Activated T-helper 1 cell treated with anti-CD3 and anti-CD28 coated beads, Interleukin-12 subunit alpha, Interleukin-12 subunit beta, Interleukin-2, Interleukin-4 antibody, amounts not matched to agents 30 ng/mL and 10 ng/mL and 1 ng/mL, durations not matched to agents 14 hours and 24 hours and 36 hours (primary cell): ENCODE measurements at regions of chr6 and their contacts with region 1.

Region 1: GRCh38 chr6:20708367-20709124 is 174.3 kb downstream of the CDKAL1 start:
- DNase-seq: no peak
- H3K4me3 Mint-ChIP-seq: no peak overlapping the region
- H3K27ac Mint-ChIP-seq: peak overlapping the region; percentile 75
- H3K4me1 Mint-ChIP-seq: peaks cover 43% of the 10 kb centered on the region
- H3K27me3 Mint-ChIP-seq: no peaks in the 10 kb centered on the region

Region 2: DNA sequence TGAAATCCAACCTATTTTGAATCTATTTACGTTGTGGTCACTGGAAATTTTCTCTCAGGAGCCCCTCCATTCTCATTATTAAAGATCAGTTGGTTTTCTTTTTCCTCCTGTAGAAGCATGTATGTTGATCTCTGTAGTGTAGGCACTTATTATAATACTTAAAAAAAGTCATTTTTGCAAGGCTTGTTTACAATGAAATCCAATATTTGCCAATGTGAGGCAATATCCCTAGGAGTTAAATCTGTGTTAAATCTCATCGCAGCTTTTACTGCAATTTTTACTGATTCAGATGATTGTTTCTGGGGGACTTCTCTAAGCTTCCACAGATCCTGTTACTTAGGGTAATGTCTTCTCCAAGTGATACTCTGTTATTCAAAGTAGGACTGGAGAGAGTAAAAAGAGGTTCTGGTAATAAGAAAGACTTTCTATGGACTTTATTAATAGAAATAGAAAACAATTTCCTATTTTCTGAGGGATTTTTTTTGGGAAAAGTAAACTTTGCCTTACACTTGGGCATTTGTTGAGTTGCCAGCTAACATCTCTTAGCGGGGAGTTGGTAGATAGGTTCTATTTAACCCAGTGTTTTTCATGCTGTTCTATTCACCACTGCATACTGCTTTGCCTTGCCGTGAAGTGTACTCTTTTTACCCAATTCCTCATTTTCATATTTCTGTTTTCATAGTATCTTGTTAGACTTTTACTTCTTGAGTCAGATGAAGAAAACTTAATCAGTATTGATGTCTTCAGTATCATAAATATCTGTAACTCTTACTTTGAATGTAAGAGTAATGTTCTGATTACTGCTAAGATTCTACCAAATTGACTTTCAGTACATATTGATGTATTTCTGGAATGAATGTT is 125.7 kb before region 1 on chr6:
- intact Hi-C with region 1: loop called (anchors 5 kb)
- DNase-seq: no peak
- H3K4me3 Mint-ChIP-seq: no peak overlapping the region
- H3K27ac Mint-ChIP-seq: peak overlapping the region; percentile 73
- H3K4me1 Mint-ChIP-seq: peaks cover 19% of the 10 kb centered on the region
- H3K27me3 Mint-ChIP-seq: no peaks in the 10 kb centered on the region

Region 3: GRCh38 chr6:20630617-20631548 is 77.7 kb before region 1 on chr6:
- intact Hi-C with region 1: loop called (anchors 1 kb)
- DNase-seq: no peak
- H3K4me3 Mint-ChIP-seq: no peak overlapping the region
- H3K27ac Mint-ChIP-seq: no peak overlapping the region
- H3K4me1 Mint-ChIP-seq: peaks cover 30% of the 10 kb centered on the region
- H3K27me3 Mint-ChIP-seq: no peaks in the 10 kb centered on the region

Region 4: GRCh38 chr6:20680697-20681165 is 27.8 kb before region 1 on chr6:
- intact Hi-C with region 1: loop called (anchors 2 kb)
- DNase-seq: no peak
- H3K4me3 Mint-ChIP-seq: no peak overlapping the region
- H3K27ac Mint-ChIP-seq: peak overlapping the region; percentile 42
- H3K4me1 Mint-ChIP-seq: peaks cover 13% of the 10 kb centered on the region
- H3K27me3 Mint-ChIP-seq: no peaks in the 10 kb centered on the region

Region 5: GRCh38 chr6:20846602-20847028 is 138.1 kb after region 1 on chr6:
- intact Hi-C with region 1: loop called (anchors 10 kb)
- DNase-seq: no peak
- H3K4me3 Mint-ChIP-seq: no peak overlapping the region
- H3K27ac Mint-ChIP-seq: no peak overlapping the region
- H3K4me1 Mint-ChIP-seq: peaks cover 27% of the 10 kb centered on the region
- H3K27me3 Mint-ChIP-seq: no peaks in the 10 kb centered on the region

Region 6: DNA sequence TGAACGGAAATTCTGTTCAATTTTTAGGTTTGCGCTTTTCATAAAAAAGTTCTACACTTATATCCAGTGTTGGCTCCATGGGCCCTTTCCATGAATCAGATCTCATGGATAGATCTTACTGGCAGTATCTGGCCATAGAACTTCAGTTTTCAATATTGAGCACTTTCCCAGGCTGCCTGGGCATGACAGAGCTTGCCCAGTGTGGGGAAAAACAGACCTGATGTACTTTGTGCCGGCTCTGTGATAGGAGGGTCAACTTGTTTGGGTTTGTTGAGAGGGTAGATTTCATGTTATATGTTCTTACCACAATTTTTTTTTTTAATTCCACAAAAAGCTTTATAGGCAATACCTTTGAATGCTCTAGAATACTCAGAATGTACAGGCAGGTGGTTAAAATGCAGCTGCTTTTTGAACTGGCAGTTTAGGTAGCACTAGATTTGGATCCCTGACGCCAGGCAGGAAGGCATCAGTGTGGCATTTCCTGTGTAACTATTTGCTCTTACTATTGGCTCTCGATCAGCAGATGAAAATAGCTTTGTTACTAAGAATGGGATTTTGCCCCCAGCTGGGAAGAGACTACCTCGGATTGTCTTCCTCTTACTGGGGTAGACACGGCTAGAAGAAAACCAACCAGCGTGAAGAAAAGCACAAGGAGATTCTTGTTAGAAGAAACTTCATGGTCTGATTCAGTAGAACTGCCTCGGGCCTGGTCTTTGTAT is 480.1 kb after region 1 on chr6:
- intact Hi-C with region 1: loop called (anchors 10 kb)
- DNase-seq: no peak
- H3K4me3 Mint-ChIP-seq: no peak overlapping the region
- H3K27ac Mint-ChIP-seq: no peak overlapping the region
- H3K4me1 Mint-ChIP-seq: peaks cover 30% of the 10 kb centered on the region
- H3K27me3 Mint-ChIP-seq: no peaks in the 10 kb centered on the region